A673 (cell line): ENCODE measurements at regions of chr5 and their contacts with region 1.

Region 1: GRCh38 chr5:76555717-76556116 is 67.5 kb downstream of the F2RL2 start:
- DNase-seq: no peak
- H3K4me3 ChIP-seq: no peak overlapping the region
- H3K27ac ChIP-seq: no peak overlapping the region
- H3K4me1 ChIP-seq: peaks cover 4% of the 10 kb centered on the region
- H3K27me3 ChIP-seq: no peaks in the 10 kb centered on the region
- CTCF ChIP-seq: no peak

Region 2: DNA sequence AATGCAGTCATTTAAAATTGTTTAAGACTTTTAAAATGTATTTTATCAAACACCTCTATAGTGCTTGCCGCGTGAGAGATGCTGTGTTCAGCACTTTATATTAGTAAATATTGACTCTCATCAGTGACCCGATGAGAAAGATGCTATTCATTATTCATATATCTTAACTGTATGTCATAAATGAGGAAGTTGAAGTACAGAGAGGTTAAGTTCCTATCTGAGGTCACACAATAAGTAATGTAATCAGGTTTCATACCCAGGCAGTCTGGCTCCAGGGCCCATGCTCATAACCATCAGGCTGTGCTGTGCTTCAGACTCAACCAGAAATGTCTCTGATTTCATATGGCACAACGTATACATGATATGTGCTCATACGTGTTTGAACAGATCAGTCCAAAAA is 353.5 kb before region 1 on chr5:
- CTCF ChIA-PET with region 1: no interaction called
- POLR2A ChIA-PET with region 1: interaction called, 11 read pairs
- intact Hi-C with region 1: no loop called
- DNase-seq: no peak
- H3K4me3 ChIP-seq: no peak overlapping the region
- H3K27ac ChIP-seq: no peak overlapping the region
- H3K4me1 ChIP-seq: peaks cover 19% of the 10 kb centered on the region
- H3K27me3 ChIP-seq: no peaks in the 10 kb centered on the region
- CTCF ChIP-seq: no peak

Region 3: DNA sequence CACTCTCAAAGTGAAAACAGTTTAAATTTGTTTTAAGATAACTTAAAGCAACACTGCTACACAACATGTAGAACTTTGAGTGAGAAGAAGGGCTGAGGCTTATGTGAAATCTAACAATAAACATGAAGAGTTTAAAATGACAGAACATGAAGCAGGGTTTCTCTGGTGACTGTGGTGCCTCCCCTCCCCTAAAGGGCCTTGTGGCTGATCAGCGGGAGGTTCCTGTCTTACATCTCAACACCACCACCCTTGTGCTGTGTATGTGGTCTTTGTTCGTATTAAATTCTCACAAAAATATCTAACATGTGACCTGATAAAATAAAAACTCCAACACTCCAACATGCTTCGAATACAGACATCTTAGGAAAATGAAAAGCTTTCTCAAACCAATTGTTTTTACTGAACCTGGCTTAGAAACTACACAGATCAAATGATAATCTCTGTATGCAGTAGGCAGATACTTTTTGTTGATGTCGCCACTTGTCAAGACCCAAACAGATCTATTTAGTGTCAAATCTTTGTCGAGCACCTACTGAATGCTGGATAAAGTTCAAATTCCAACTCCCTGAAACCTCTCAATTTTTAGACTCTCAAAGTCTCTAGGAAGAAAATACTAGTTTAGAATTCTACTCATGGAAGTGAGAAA is 162.6 kb before region 1 on chr5:
- CTCF ChIA-PET with region 1: no interaction called
- POLR2A ChIA-PET with region 1: no interaction called
- intact Hi-C with region 1: no loop called
- DNase-seq: peak; percentile 60
- H3K4me3 ChIP-seq: no peak overlapping the region
- H3K27ac ChIP-seq: peak overlapping the region; percentile 55
- H3K4me1 ChIP-seq: peaks cover 22% of the 10 kb centered on the region
- H3K27me3 ChIP-seq: no peaks in the 10 kb centered on the region
- CTCF ChIP-seq: no peak

Region 4: GRCh38 chr5:76805850-76806505 is 250.3 kb after region 1 on chr5:
- CTCF ChIA-PET with region 1: no interaction called
- POLR2A ChIA-PET with region 1: no interaction called
- intact Hi-C with region 1: no loop called
- DNase-seq: peak; percentile 82
- H3K4me3 ChIP-seq: no peak overlapping the region
- H3K27ac ChIP-seq: no peak overlapping the region
- H3K4me1 ChIP-seq: peaks cover 22% of the 10 kb centered on the region
- H3K27me3 ChIP-seq: no peaks in the 10 kb centered on the region
- CTCF ChIP-seq: no peak